CD4-positive, alpha-beta memory T cell (primary cell): ENCODE measurements at regions of chr1 and their contacts with region 1.

Region 1: GRCh38 chr1:117534995-117535467 is 70.8 kb upstream of the TENT5C start:
- DNase-seq: peak; percentile 61 to 68 (median 66)
- H3K4me3 ChIP-seq: no peak overlapping the region
- H3K4me3 Mint-ChIP-seq: peak overlapping the region in 1 of 8 donors; percentile 21
- H3K27ac ChIP-seq: no peak overlapping the region
- H3K27ac Mint-ChIP-seq: peak overlapping the region in 3 of 7 donors; percentile 23 to 53 (median 27)
- H3K4me1 ChIP-seq: peaks cover 21% of the 10 kb centered on the region
- H3K4me1 Mint-ChIP-seq: peaks cover 0 to 6% (median 0%) of the 10 kb centered on the region in 4 donors
- H3K27me3 ChIP-seq: no peaks in the 10 kb centered on the region
- H3K27me3 Mint-ChIP-seq: no peaks in the 10 kb centered on the region

Region 2: DNA sequence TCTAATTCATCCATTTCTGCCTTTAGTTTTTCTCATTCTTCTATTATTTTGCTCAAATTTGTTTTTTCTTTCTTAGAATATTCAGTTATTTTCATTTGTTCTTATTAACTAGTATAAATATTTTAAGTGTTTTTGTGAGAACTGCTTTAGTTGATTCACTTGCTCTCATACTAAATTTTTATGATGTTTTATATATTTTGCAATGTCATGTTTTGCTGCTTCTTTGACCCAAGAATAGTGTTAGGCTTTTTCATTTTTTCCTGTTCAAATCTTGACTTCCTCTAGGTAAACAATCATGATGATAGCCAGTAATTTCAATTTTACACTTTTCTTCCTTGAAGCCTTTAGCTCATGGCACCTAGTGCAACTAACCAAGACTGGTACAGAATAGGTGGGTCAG is 122.6 kb before region 1 on chr1:
- CTCF ChIA-PET with region 1: no interaction called
- POLR2A ChIA-PET with region 1: no interaction called
- intact Hi-C with region 1: no loop called
- DNase-seq: no peak
- H3K4me3 ChIP-seq: no peak overlapping the region
- H3K4me3 Mint-ChIP-seq: no peak overlapping the region
- H3K27ac ChIP-seq: no peak overlapping the region
- H3K27ac Mint-ChIP-seq: no peak overlapping the region
- H3K4me1 ChIP-seq: peaks cover 6% of the 10 kb centered on the region
- H3K4me1 Mint-ChIP-seq: peaks cover 20 to 41% (median 27%) of the 10 kb centered on the region in 4 donors
- H3K27me3 ChIP-seq: no peaks in the 10 kb centered on the region
- H3K27me3 Mint-ChIP-seq: no peaks in the 10 kb centered on the region

Region 3: DNA sequence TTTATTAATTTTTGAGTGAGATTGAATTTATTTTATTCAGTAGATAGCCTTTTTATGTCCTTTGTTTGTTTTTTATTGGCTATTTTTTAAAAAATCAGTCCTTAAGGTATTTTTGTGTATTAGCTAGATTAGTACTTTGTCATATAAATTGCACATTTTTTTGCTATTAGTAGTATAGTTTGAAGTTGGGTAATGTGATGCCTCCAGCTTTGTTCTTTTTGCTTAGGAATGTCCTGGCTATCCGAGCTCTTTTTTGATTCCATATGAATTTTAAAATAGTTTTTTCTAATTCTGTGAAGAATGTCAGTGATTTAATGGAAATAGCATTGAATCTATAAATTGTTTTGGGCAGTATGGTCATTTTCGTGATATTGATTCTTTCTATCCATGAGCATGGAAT is 87.4 kb before region 1 on chr1:
- CTCF ChIA-PET with region 1: no interaction called
- POLR2A ChIA-PET with region 1: no interaction called
- intact Hi-C with region 1: no loop called
- DNase-seq: no peak
- H3K4me3 ChIP-seq: no peak overlapping the region
- H3K4me3 Mint-ChIP-seq: no peak overlapping the region
- H3K27ac ChIP-seq: no peak overlapping the region
- H3K27ac Mint-ChIP-seq: peak overlapping the region in 1 of 7 donors; percentile 46
- H3K4me1 ChIP-seq: no peaks in the 10 kb centered on the region
- H3K4me1 Mint-ChIP-seq: peaks cover 0 to 2% (median 0%) of the 10 kb centered on the region in 4 donors
- H3K27me3 ChIP-seq: no peaks in the 10 kb centered on the region
- H3K27me3 Mint-ChIP-seq: no peaks in the 10 kb centered on the region

Region 4: DNA sequence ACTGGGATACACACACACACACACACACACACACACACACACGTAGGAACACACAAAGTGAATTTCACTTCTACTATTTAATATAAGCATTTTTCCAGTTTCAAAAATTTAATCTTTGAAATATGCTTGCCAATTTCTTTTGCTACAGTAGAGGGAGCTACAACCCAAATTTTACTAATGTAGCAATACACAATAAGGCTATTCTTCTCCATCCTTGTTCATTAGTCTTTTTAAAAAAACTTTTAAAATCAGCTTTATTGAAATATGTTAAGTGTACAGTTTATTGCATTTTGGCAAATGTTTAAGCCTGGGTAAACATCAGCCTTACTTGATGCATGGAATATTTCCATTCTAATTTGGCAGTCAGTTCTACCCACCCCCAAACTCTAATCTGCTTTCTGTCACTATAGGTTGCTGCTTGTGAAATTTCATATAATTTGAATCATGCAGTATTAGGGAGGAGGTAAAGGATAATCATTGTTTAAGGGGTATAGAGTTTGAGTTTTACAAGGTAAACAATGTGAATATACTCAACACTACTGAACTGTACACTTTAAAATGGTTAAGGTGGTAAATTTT is 22.2 kb before region 1 on chr1:
- CTCF ChIA-PET with region 1: interaction called, 57 read pairs
- POLR2A ChIA-PET with region 1: no interaction called
- intact Hi-C with region 1: no loop called
- DNase-seq: peak in 4 of 5 donors; percentile 23 to 35 (median 28)
- H3K4me3 ChIP-seq: no peak overlapping the region
- H3K4me3 Mint-ChIP-seq: no peak overlapping the region
- H3K27ac ChIP-seq: no peak overlapping the region
- H3K27ac Mint-ChIP-seq: no peak overlapping the region
- H3K4me1 ChIP-seq: no peaks in the 10 kb centered on the region
- H3K4me1 Mint-ChIP-seq: peaks cover 0 to 1% (median 0%) of the 10 kb centered on the region in 4 donors
- H3K27me3 ChIP-seq: no peaks in the 10 kb centered on the region
- H3K27me3 Mint-ChIP-seq: no peaks in the 10 kb centered on the region

Region 5: GRCh38 chr1:117582451-117582850 is 47.4 kb after region 1 on chr1:
- CTCF ChIA-PET with region 1: interaction called, 19 read pairs
- POLR2A ChIA-PET with region 1: no interaction called
- intact Hi-C with region 1: no loop called
- DNase-seq: no peak
- H3K4me3 ChIP-seq: no peak overlapping the region
- H3K4me3 Mint-ChIP-seq: no peak overlapping the region
- H3K27ac ChIP-seq: no peak overlapping the region
- H3K27ac Mint-ChIP-seq: peak overlapping the region in 1 of 7 donors; percentile 57
- H3K4me1 ChIP-seq: no peaks in the 10 kb centered on the region
- H3K4me1 Mint-ChIP-seq: peaks cover 0 to 1% (median 0%) of the 10 kb centered on the region in 4 donors
- H3K27me3 ChIP-seq: no peaks in the 10 kb centered on the region
- H3K27me3 Mint-ChIP-seq: no peaks in the 10 kb centered on the region

Region 6: GRCh38 chr1:117612517-117613248 is 77.7 kb after region 1 on chr1:
- CTCF ChIA-PET with region 1: interaction called, 40 read pairs
- POLR2A ChIA-PET with region 1: interaction called, 24 read pairs
- intact Hi-C with region 1: no loop called
- DNase-seq: no peak
- H3K4me3 ChIP-seq: no peak overlapping the region
- H3K4me3 Mint-ChIP-seq: peak overlapping the region in 5 of 8 donors; percentile 5 to 77 (median 56)
- H3K27ac ChIP-seq: no peak overlapping the region
- H3K27ac Mint-ChIP-seq: peak overlapping the region in 5 of 7 donors; percentile 26 to 75 (median 53)
- H3K4me1 ChIP-seq: peaks cover 99% of the 10 kb centered on the region
- H3K4me1 Mint-ChIP-seq: peaks cover 73 to 99% (median 86%) of the 10 kb centered on the region in 4 donors
- H3K27me3 ChIP-seq: no peaks in the 10 kb centered on the region
- H3K27me3 Mint-ChIP-seq: no peaks in the 10 kb centered on the region

Region 7: DNA sequence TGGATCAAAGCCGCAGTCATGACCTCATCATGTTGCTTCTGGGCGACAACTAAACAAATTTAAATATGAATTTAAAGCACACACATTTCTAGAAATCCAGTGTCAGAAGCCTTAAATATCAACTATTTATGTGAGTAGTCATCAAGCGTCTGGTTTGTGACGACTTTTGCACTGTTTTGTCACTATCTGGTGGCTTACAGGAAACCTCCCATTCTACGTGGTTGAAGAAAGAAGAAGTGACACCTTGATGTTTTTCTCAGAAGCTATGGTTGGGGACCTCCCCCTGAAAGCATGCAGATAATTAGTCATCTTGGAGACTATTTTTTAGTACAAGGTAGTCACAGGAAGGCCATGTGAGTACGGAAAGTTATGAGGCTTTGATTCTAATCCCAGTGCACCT is 129.3 kb after region 1 on chr1:
- CTCF ChIA-PET with region 1: interaction called, 278 read pairs
- POLR2A ChIA-PET with region 1: interaction called, 6 read pairs
- intact Hi-C with region 1: no loop called
- DNase-seq: peak; percentile 84 to 92 (median 89)
- H3K4me3 ChIP-seq: no peak overlapping the region
- H3K4me3 Mint-ChIP-seq: peak overlapping the region in 6 of 8 donors; percentile 29 to 82 (median 64)
- H3K27ac ChIP-seq: peak overlapping the region; percentile 71
- H3K27ac Mint-ChIP-seq: peak overlapping the region; percentile 86 to 99 (median 98)
- H3K4me1 ChIP-seq: peaks cover 77% of the 10 kb centered on the region
- H3K4me1 Mint-ChIP-seq: peaks cover 60 to 89% (median 73%) of the 10 kb centered on the region in 4 donors
- H3K27me3 ChIP-seq: no peaks in the 10 kb centered on the region
- H3K27me3 Mint-ChIP-seq: no peaks in the 10 kb centered on the region

Region 8: DNA sequence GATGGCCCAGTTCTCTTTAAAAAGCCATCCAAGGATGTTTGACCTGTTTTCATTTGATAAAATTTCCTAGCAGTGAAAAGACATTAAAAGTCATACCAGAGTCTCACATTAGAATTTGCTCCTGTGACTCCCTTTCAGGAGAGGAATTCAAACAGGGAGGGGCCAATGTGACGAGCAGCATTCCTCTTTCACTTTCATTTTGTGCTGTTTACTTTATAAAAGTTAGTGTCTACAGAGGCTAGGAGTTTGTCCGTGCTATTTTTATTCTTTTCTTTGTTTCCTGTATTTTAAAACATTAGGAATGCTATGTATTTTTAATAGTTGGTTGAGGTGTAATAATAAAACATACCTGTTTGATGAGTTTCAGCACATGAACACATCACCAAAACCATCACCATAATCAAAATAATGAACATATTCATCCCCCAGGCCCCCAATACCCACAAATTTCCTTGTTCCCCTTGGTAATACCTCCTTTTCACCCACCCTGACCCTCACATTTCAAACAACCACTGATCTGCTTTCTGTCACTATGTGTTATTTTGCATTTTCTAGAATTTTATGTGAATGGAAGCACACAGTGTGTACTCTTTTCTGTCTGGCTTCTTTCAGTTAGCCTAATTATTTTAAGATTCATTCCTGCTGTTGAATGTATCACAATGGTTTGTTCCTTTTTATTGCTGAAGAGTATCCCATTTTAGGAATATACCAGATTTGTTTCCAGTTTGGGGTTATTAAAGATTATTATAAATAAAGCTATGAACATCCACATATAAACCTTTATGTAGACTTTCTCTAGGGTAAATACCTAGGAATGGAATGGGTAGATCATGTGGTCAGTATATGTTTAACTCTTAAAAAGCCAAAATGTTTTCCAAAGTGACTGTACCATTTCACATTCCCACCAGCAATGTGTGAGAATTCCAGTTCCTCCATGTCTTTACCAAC is 200.3 kb after region 1 on chr1:
- CTCF ChIA-PET with region 1: interaction called, 17 read pairs
- POLR2A ChIA-PET with region 1: no interaction called
- intact Hi-C with region 1: no loop called
- DNase-seq: peak; percentile 39 to 56 (median 52)
- H3K4me3 ChIP-seq: peak overlapping the region; percentile 26 to 44
- H3K4me3 Mint-ChIP-seq: peak overlapping the region; percentile 63 to 95 (median 88)
- H3K27ac ChIP-seq: peak overlapping the region; percentile 45
- H3K27ac Mint-ChIP-seq: peak overlapping the region; percentile 66 to 96 (median 94)
- H3K4me1 ChIP-seq: peaks cover 14% of the 10 kb centered on the region
- H3K4me1 Mint-ChIP-seq: peaks cover 10 to 24% (median 20%) of the 10 kb centered on the region in 4 donors
- H3K27me3 ChIP-seq: no peaks in the 10 kb centered on the region
- H3K27me3 Mint-ChIP-seq: no peaks in the 10 kb centered on the region